ENCODE measurements at regions of chr13 and their contacts with region 1.

Region 1: DNA sequence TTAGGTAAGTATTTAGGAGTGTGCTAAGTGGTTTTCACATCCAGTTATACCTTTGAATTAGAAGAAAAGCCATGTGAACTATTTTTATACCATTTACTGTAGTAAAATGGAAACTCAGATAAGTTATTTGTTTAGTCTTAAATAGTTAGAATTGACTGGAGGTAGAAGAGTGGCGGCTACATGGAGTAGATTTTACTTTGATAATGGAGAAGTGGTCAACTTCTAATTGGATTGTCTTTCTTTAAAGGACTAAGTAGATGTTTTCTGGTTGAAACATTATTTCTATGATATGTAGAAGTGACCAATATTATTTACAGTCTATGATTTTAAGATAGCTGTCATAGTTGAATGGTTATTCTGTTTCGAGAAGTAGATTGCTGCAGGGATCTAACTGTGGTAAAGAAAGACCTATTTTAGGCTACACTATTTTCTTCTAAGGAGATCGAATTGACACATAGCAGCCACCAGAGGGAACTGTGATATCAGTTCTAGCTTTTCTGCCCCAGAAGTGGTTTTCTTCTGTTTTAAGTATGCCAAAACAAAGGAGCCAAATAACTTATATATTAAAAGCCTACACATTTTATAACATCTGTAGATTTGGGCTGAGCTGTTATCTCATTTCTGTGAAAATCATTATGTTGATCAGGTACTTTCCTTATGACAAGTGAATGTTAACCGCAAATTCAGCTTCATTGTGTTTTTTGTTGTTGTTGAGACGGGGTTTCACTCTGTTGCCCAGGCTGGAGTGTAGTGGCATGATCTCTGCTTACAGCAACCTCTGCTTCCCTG is 26.1 kb downstream of the ZMYM2 start:
- DNase-seq: peak in 2 of 5 donors; percentile 2 to 8
- H3K4me3 ChIP-seq: no peak overlapping the region
- H3K4me3 Mint-ChIP-seq: peak overlapping the region in 2 of 7 donors; percentile 10 to 40
- H3K27ac ChIP-seq: no peak overlapping the region
- H3K27ac Mint-ChIP-seq: peak overlapping the region in 6 of 8 donors; percentile 14 to 79 (median 54)
- H3K4me1 ChIP-seq: peaks cover 21% of the 10 kb centered on the region
- H3K4me1 Mint-ChIP-seq: peaks cover 43 to 79% (median 67%) of the 10 kb centered on the region in 3 donors
- H3K27me3 ChIP-seq: no peaks in the 10 kb centered on the region
- H3K27me3 Mint-ChIP-seq: no peaks in the 10 kb centered on the region

Region 2: DNA sequence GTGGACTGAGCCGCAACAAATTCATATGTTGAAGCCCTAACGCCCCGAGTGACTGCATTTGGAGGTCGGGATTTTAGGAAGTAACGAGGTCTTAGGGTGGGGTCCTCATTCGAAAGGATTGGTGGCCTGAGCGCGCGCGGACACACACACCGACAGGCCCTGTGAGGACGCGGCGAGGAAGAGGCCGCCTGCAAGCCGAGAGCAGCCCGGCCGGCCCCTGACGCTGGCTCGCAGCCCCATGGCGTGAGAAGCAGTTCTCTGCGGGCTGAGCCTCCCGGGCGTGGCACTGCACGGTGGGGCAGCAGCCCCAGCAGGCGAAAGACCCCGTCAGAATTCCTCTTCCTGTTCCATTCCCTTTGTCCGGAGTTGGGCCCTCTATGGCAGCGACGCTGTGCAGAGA is 409.9 kb after region 1 on chr13:
- CTCF ChIA-PET with region 1: no interaction called
- POLR2A ChIA-PET with region 1: interaction called, 10 read pairs
- DNase-seq: no peak
- H3K4me3 ChIP-seq: no peak overlapping the region
- H3K4me3 Mint-ChIP-seq: no peak overlapping the region
- H3K27ac ChIP-seq: no peak overlapping the region
- H3K27ac Mint-ChIP-seq: no peak overlapping the region
- H3K4me1 ChIP-seq: no peaks in the 10 kb centered on the region
- H3K4me1 Mint-ChIP-seq: no peaks in the 10 kb centered on the region
- H3K27me3 ChIP-seq: no peaks in the 10 kb centered on the region
- H3K27me3 Mint-ChIP-seq: no peaks in the 10 kb centered on the region